K562 (cell line): ENCODE measurements at regions of chr7 and their contacts with region 1.

Region 1: DNA sequence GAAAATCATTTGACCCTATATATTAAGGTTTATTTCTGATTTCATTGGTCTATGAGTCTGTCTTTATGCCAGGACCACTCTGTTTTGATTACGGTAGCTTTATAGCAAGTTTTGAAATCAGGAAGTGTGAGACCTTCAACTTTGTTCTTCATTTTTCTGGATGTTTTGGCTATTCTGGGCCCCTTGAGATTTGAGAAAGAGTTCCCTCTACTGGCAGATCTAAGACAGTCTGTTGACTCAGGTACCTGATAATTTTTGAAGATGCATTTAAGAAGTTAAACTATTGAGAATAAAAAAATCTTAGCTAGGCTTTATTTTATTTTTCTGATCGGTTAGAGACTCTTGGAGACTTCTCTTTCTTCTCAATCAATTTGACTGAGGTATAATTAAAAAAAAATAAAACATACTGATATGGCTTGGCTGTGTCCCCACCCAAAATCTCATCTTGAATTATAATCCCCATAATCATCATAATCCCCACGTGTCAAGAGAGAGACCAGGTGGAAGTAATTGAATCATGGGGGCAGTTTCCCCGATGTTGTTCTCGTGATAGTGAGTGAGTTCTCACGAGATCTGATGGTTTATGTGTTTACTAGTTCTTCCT is 209.2 kb downstream of the SNX10 start:
- DNase-seq: peak in 2 of 4 experiments; percentile 39 to 55
- ATAC-seq: peak; percentile 79
- H3K4me3 ChIP-seq: no peak overlapping the region
- H3K27ac ChIP-seq: no peak overlapping the region
- H3K4me1 ChIP-seq: peaks cover 3 to 8% of the 10 kb centered on the region in 2 experiments; a peak in 3 of 5 replicates
- H3K27me3 ChIP-seq: peaks cover 13 to 16% of the 10 kb centered on the region in 2 experiments; a peak in 4 of 5 replicates
- CTCF ChIP-seq: peak; percentile 39 to 83 (median 61); a peak in 5 of 6 replicates
- EP300 ChIP-seq: no peak
- POLR2A ChIP-seq: no peak
- RAD21 ChIP-seq: peak; percentile 86 to 89

Region 2: GRCh38 chr7:26061688-26062150 is 439.1 kb before region 1 on chr7:
- CTCF ChIA-PET with region 1: no interaction called
- POLR2A ChIA-PET with region 1: no interaction called
- in situ Hi-C with region 1: no loop called
- intact Hi-C with region 1: loop called (anchors 10 kb)
- DNase-seq: peak; percentile 68 to 72 (median 70)
- ATAC-seq: peak; percentile 94
- H3K4me3 ChIP-seq: no peak overlapping the region
- H3K27ac ChIP-seq: no peak overlapping the region
- H3K4me1 ChIP-seq: no peaks in the 10 kb centered on the region
- H3K27me3 ChIP-seq: peaks cover 21 to 29% of the 10 kb centered on the region in 2 experiments
- CTCF ChIP-seq: peak; percentile 83 to 85 (median 84)
- EP300 ChIP-seq: no peak
- POLR2A ChIP-seq: no peak
- RAD21 ChIP-seq: peak; percentile 75 to 85

Region 3: GRCh38 chr7:26090927-26091519 is 409.8 kb before region 1 on chr7:
- CTCF ChIA-PET with region 1: no interaction called
- POLR2A ChIA-PET with region 1: no interaction called
- in situ Hi-C with region 1: no loop called
- intact Hi-C with region 1: no loop called
- DNase-seq: peak; percentile 28 to 61 (median 38)
- ATAC-seq: peak; percentile 86
- H3K4me3 ChIP-seq: no peak overlapping the region
- H3K27ac ChIP-seq: no peak overlapping the region
- H3K4me1 ChIP-seq: no peaks in the 10 kb centered on the region; a peak in 1 of 5 replicates
- H3K27me3 ChIP-seq: peaks cover 0 to 5% of the 10 kb centered on the region in 2 experiments; a peak in 1 of 5 replicates
- CTCF ChIP-seq: peak; percentile 63 to 74 (median 69)
- EP300 ChIP-seq: no peak
- POLR2A ChIP-seq: no peak
- RAD21 ChIP-seq: peak; percentile 82 to 88

Region 4: GRCh38 chr7:26365077-26365900 is 135.6 kb before region 1 on chr7:
- CTCF ChIA-PET with region 1: interaction called, 21 read pairs
- POLR2A ChIA-PET with region 1: no interaction called
- in situ Hi-C with region 1: no loop called
- intact Hi-C with region 1: loop called (anchors 1 kb)
- DNase-seq: peak; percentile 18 to 78 (median 30)
- ATAC-seq: peak; percentile 86
- H3K4me3 ChIP-seq: no peak overlapping the region
- H3K27ac ChIP-seq: no peak overlapping the region
- H3K4me1 ChIP-seq: no peaks in the 10 kb centered on the region; a peak in 1 of 5 replicates
- H3K27me3 ChIP-seq: no peaks in the 10 kb centered on the region
- CTCF ChIP-seq: peak; percentile 70 to 90 (median 71); a peak in 5 of 6 replicates
- EP300 ChIP-seq: no peak
- POLR2A ChIP-seq: no peak
- RAD21 ChIP-seq: peak; percentile 97 to 98